Activated naive CD4-positive, alpha-beta T cell treated with anti-CD3 and anti-CD28 coated beads for 36 hours (primary cell): ENCODE measurements at regions of chr2 and their contacts with region 1.

Region 1: DNA sequence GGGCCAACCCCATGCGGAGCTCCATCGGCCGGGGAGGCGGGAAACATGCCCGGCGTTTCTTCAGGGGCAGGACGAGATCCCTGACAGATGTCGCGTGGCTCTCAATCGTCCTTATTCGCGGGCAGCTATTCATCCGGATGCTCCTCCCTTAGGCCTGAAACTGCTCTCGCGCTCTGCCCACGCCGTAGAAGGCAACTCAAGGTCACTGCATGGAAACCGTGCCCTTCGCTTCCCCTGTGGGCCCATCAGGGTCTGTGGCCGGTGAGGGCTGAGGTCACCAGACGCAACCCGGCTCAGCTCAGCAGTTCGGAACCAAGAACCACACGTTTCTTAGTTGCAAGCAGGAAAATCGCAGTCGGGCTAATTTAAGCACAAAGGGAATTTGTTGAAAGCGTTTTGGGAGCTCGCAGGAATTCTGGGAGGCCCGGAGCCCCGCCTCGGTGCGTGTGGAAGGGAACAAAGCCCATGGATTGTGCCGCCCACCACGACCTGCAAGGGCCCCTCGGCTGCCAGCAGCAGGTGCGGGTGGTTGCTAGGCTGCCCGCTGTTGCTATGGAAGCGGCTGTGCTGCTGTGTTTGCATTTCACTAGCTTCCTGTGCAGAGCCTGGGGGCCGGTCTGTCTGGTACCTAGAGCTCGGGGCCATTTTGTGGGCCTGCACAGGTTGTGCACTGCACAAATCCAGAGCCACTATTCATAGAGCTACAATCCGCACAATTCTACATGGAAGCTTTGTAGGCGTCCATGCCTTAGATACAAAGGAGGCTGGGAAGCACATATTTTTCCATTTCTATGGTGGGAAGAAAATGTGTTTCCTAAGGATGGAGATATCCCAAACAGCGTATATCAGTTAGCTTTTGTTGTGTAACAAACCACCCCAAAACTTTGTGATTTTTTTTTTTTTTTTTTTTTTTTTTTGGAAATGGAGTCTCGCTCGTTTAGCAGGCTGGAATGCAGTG is 6.0 kb upstream of the ALLC start:
- DNase-seq: peak; percentile 76
- H3K4me3 Mint-ChIP-seq: peak overlapping the region; percentile 70
- H3K27ac Mint-ChIP-seq: peak overlapping the region; percentile 57
- H3K4me1 Mint-ChIP-seq: peaks cover 13% of the 10 kb centered on the region
- H3K27me3 Mint-ChIP-seq: no peaks in the 10 kb centered on the region

Region 2: GRCh38 chr2:2121887-2122286 is 1530.1 kb before region 1 on chr2:
- CTCF ChIA-PET with region 1: interaction called, 3 read pairs
- intact Hi-C with region 1: loop called (anchors 5 kb)
- DNase-seq: no peak
- H3K4me3 Mint-ChIP-seq: no peak overlapping the region
- H3K27ac Mint-ChIP-seq: no peak overlapping the region
- H3K4me1 Mint-ChIP-seq: peaks cover 4% of the 10 kb centered on the region
- H3K27me3 Mint-ChIP-seq: peaks cover 3% of the 10 kb centered on the region

Region 3: DNA sequence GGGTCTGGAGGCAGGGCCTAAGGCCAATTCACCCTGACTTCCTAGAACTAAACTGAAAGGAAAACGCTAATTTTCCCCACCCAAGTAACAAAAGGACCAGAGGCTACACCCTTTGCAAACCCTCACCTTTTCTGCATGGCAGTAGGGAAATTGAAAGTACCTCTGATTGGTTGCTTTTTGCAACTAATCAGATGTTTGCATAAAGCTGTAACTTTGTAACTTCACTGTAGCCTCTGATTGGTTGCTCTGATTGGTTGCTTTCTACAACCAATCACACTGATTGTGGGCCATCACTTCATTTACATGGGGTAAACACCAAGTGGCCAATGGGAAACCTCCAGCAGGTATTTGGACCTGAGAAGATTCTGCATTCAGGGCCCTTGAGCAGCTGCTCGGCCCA is 295.2 kb before region 1 on chr2:
- CTCF ChIA-PET with region 1: no interaction called
- intact Hi-C with region 1: no loop called
- DNase-seq: no peak
- H3K4me3 Mint-ChIP-seq: no peak overlapping the region
- H3K27ac Mint-ChIP-seq: no peak overlapping the region
- H3K4me1 Mint-ChIP-seq: peaks cover 18% of the 10 kb centered on the region
- H3K27me3 Mint-ChIP-seq: no peaks in the 10 kb centered on the region

Region 4: DNA sequence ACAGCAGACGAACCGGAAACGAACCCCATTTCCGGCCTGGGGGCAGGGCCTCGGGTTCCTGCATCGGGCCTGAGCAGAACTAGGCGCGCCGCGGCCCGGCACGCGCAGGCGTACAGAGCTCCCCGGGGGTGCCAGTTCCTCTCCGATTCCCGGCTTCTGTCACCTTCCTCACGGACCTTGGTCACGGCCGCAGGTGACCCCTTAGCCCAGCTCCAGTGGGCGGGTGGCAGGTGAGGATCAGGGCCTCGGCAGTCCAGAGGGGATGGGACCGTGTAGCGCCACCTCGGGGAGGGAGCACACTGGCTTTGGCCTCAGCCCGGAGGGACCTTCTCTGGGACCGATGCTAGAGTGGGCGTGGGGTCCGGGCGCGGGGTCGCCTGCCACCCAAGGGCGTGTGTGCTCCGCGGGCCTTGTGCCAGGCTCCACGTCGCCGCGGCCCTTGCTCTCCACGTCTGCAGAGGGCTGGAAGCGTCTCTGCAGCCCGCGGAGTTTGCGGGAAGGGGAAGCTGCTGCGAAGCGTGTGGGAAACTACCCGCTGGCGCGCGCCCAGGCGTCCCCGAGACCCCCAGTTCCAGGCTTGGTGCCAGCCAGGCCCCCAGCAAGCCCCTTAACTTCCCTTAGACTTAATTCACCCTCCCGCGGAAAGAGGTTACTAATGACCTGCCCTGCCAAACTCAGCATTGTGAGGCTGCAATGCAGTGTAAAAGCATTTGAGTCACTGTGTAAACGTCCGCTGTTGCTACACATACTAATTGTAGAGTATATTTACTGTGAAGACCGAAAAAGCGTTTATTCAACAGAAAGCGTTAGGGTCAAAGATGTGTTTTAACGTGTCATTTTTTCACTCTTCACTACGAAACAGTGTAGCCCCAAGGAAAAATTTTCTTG is 272.1 kb before region 1 on chr2 and contains the start of gene TRAPPC12:
- CTCF ChIA-PET with region 1: interaction called, 3 read pairs
- intact Hi-C with region 1: loop called (anchors 1 kb)
- DNase-seq: peak; percentile 93
- H3K4me3 Mint-ChIP-seq: peak within 1 kb of the TSS; percentile 97
- H3K27ac Mint-ChIP-seq: peak within 1 kb of the TSS; percentile 94
- H3K4me1 Mint-ChIP-seq: peaks cover 49% of the 10 kb centered on the region
- H3K27me3 Mint-ChIP-seq: no peaks in the 10 kb centered on the region
- total RNA-seq, gene TRAPPC12: 44.3 to 45.8 TPM

Region 5: DNA sequence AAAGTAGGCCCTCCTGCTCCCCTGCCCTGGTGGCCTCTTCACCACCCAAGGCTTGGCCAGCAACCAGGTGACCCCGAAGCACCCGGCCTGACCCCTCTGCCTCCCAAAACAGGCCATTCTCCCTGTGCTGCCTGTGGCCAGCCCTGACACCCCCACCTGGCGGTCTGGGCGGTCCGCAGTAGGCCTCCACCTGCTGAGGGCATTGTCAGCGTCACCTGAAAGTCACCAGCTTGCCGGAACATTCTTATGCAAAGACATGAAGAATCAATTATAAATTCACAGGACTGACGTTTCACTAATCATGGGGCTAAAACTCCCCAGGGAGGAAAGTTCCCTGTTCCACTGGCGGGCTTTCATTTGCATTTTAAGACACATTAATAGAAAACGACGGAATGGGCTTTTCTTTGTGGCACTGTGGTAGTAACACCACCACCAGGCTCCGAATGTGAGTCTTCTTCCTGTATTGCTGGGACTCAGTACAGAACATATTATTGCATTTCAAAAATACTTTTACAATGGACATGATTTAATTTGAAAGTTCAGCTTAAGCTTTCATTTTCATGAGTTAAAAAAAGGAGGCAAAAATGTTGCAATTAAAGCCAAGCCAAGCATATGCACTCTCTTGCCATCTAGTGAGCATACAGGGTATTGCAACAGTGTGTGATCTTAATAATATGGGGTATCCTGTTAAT is 190.0 kb before region 1 on chr2:
- CTCF ChIA-PET with region 1: interaction called, 6 read pairs
- intact Hi-C with region 1: loop called (anchors 1 kb)
- DNase-seq: peak; percentile 66
- H3K4me3 Mint-ChIP-seq: no peak overlapping the region
- H3K27ac Mint-ChIP-seq: peak overlapping the region; percentile 79
- H3K4me1 Mint-ChIP-seq: peaks cover 13% of the 10 kb centered on the region
- H3K27me3 Mint-ChIP-seq: no peaks in the 10 kb centered on the region

Region 6: GRCh38 chr2:3536682-3537632 is 115.0 kb before region 1 on chr2:
- CTCF ChIA-PET with region 1: no interaction called
- intact Hi-C with region 1: loop called (anchors 1 kb)
- DNase-seq: no peak
- H3K4me3 Mint-ChIP-seq: peak overlapping the region; percentile 61
- H3K27ac Mint-ChIP-seq: peak overlapping the region; percentile 83
- H3K4me1 Mint-ChIP-seq: peaks cover 3% of the 10 kb centered on the region
- H3K27me3 Mint-ChIP-seq: no peaks in the 10 kb centered on the region

Region 7: GRCh38 chr2:3575534-3576262 is 76.3 kb before region 1 on chr2:
- CTCF ChIA-PET with region 1: interaction called, 7 read pairs
- intact Hi-C with region 1: loop called (anchors 1 kb)
- DNase-seq: peak; percentile 27
- H3K4me3 Mint-ChIP-seq: peak overlapping the region; percentile 88
- H3K27ac Mint-ChIP-seq: peak overlapping the region; percentile 91
- H3K4me1 Mint-ChIP-seq: peaks cover 50% of the 10 kb centered on the region
- H3K27me3 Mint-ChIP-seq: no peaks in the 10 kb centered on the region